Activated CD8-positive, alpha-beta memory T cell treated with anti-CD3 and anti-CD28 coated beads, Interleukin-2, amount 10 ng/mL, durations not matched to agents 7 days and 5 days (primary cell): ENCODE measurements at regions of chr1 and their contacts with region 1.

Region 1: GRCh38 chr1:171984850-171985485 is 143.7 kb downstream of the DNM3 start:
- DNase-seq: no peak
- ATAC-seq: peak; percentile 63
- H3K4me3 Mint-ChIP-seq: no peak overlapping the region
- H3K27ac Mint-ChIP-seq: no peak overlapping the region
- H3K4me1 Mint-ChIP-seq: peaks cover 2% of the 10 kb centered on the region
- H3K27me3 Mint-ChIP-seq: peaks cover 2% of the 10 kb centered on the region

Region 2: DNA sequence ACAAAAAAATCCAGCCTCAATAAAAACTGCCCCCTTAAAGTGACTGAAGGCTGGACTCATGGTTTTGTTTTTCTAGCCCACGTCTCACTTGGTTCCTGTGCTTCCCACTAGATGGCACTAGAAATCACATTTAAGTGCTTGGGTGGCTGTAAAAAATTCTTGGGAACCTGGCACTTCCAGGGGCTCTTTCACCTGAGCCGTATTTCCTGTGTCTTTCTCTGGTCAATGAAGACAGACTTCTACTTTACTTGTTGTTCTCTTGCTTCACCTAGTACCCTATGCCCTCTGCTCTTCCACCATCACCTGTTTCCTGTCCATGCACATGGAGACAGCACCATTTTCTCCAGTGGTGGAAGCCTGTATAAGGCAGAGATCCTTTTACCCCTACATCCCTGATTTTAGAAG is 183.5 kb before region 1 on chr1:
- CTCF ChIA-PET with region 1: interaction called, 94 read pairs
- DNase-seq: no peak
- ATAC-seq: no peak
- H3K4me3 Mint-ChIP-seq: no peak overlapping the region
- H3K27ac Mint-ChIP-seq: peak overlapping the region; percentile 7
- H3K4me1 Mint-ChIP-seq: peaks cover 10% of the 10 kb centered on the region
- H3K27me3 Mint-ChIP-seq: no peaks in the 10 kb centered on the region

Region 3: DNA sequence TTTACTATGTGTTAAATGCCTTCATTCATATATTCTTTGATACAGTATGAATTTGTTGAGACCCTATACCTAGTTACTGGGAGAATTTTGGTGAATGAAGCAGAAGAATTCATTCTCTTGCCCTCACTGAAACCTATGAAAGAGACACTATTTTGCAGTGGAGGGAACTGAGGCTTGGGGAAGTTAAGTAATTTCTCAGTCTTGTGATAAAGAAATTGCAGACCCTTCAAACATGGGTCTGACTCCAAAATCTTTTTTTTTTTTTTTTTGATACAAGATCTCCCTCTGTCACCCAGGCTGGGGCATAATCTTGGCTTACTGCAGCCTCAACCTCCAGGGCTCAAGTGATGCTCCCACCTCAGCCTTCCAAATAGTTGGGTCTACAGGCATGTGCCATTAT is 11.5 kb before region 1 on chr1:
- CTCF ChIA-PET with region 1: interaction called, 11 read pairs
- DNase-seq: no peak
- ATAC-seq: no peak
- H3K4me3 Mint-ChIP-seq: no peak overlapping the region
- H3K27ac Mint-ChIP-seq: no peak overlapping the region
- H3K4me1 Mint-ChIP-seq: no peaks in the 10 kb centered on the region
- H3K27me3 Mint-ChIP-seq: peaks cover 14% of the 10 kb centered on the region

Region 4: DNA sequence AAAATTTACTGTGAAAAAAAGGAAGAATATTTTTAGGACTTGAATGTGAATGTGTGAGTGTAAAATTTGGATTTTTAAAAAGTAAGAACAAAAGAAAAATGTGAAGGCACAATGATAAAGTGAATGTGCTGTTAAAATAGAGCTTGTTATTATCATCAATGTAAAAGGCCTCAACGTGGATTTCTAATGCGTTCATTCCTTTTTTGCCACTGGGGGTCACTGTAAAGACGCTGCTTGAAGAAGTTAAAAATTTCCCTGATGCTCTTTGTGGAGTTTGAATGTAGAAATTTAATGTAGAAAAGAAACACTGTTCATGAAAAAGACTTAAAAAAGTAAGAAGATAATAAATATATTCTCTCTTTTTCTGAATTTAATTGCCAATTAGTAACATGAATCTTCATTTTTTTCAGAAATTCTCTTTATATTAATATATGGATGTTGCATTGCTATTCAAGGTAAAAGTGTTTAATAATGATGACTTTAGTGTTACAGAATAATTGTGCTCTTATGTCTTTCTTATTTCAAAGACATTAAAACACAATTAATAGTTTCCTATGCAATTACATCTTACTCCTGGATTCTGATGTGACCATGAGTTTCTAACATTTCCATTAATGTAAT is 17.9 kb after region 1 on chr1:
- CTCF ChIA-PET with region 1: interaction called, 12 read pairs
- DNase-seq: no peak
- ATAC-seq: no peak
- H3K4me3 Mint-ChIP-seq: no peak overlapping the region
- H3K27ac Mint-ChIP-seq: no peak overlapping the region
- H3K4me1 Mint-ChIP-seq: no peaks in the 10 kb centered on the region
- H3K27me3 Mint-ChIP-seq: no peaks in the 10 kb centered on the region